Calu3 (cell line): ENCODE measurements at regions of chr1 and their contacts with region 1.

Region 1: DNA sequence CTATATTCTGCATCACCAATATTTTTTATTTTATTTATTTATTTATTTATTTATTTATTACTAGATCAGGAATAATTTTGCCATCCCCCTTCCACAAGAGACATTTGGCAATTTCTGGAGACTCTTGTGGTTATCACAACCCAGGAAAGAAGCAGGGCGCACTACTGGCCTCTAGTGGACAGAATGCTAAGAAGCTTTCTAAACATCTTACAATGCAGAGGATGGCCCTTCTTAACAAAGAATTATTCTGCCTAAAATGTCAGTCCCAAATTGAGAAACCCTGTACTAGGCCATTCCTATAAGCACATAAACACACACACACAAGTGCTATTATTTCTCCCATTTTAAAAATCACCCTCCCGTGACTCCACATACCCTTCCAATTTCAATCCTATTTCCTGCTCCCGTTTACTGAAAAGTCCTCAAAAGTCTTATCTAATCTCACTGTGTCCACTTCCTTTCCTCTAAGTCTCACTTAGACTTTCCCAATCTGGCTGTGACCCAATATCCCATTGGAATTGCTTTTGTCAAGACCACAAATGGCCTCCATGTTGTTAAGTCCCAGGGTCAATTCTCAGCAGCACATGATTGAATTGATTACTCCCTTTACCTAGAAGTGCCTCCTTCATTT is 43.7 kb upstream of the RNF11 start:
- DNase-seq: peak; percentile 76
- H3K4me3 Mint-ChIP-seq: no peak overlapping the region
- H3K27ac Mint-ChIP-seq: no peak overlapping the region
- H3K4me1 Mint-ChIP-seq: no peaks in the 10 kb centered on the region
- H3K27me3 Mint-ChIP-seq: no peaks in the 10 kb centered on the region
- CTCF ChIP-seq: peak; percentile 85

Region 2: DNA sequence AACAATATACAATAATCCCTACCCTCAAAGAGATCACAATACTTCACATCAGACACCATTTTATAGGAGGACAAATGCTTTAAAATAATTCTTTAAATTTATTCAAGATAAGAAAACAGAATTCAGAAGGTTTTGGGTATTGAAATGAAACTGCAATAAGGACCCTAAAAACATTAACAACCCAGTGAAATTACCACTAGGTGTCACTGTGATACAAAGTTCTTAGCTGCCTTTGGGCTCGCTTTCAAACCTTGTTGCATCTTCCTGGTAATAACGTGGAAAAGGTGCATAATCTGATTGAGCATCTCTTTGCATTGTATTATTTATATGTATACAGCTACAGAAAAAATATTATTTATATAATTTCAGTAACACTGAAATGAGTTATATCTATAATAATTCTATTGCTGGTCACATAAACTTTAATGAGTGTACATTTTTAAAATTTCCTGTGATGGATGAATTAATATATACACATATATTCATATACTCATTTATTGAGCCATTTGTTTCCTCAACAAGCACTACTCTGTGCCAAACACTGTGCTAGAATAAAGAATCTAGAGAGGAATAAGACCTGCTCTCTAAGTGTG is 417.5 kb before region 1 on chr1:
- CTCF ChIA-PET with region 1: interaction called, 7 read pairs
- intact Hi-C with region 1: loop called (anchors 5 kb)
- DNase-seq: peak; percentile 12
- H3K4me3 Mint-ChIP-seq: no peak overlapping the region
- H3K27ac Mint-ChIP-seq: no peak overlapping the region
- H3K4me1 Mint-ChIP-seq: no peaks in the 10 kb centered on the region
- H3K27me3 Mint-ChIP-seq: no peaks in the 10 kb centered on the region
- CTCF ChIP-seq: no peak

Region 3: GRCh38 chr1:50929376-50929958 is 262.9 kb before region 1 on chr1:
- CTCF ChIA-PET with region 1: interaction called, 10 read pairs
- intact Hi-C with region 1: loop called (anchors 2 kb)
- DNase-seq: no peak
- H3K4me3 Mint-ChIP-seq: no peak overlapping the region
- H3K27ac Mint-ChIP-seq: no peak overlapping the region
- H3K4me1 Mint-ChIP-seq: peaks cover 17% of the 10 kb centered on the region
- H3K27me3 Mint-ChIP-seq: no peaks in the 10 kb centered on the region
- CTCF ChIP-seq: peak; percentile 20

Region 4: GRCh38 chr1:51058858-51059257 is 133.5 kb before region 1 on chr1:
- CTCF ChIA-PET with region 1: no interaction called
- intact Hi-C with region 1: loop called (anchors 5 kb)
- DNase-seq: peak; percentile 19
- H3K4me3 Mint-ChIP-seq: no peak overlapping the region
- H3K27ac Mint-ChIP-seq: no peak overlapping the region
- H3K4me1 Mint-ChIP-seq: peaks cover 32% of the 10 kb centered on the region
- H3K27me3 Mint-ChIP-seq: no peaks in the 10 kb centered on the region
- CTCF ChIP-seq: peak; percentile 54

Region 5: GRCh38 chr1:51296383-51297357 is 104.3 kb after region 1 on chr1:
- CTCF ChIA-PET with region 1: interaction called, 4 read pairs
- intact Hi-C with region 1: loop called (anchors 10 kb)
- DNase-seq: peak; percentile 90
- H3K4me3 Mint-ChIP-seq: peak overlapping the region; percentile 35
- H3K27ac Mint-ChIP-seq: peak overlapping the region; percentile 47
- H3K4me1 Mint-ChIP-seq: peaks cover 17% of the 10 kb centered on the region
- H3K27me3 Mint-ChIP-seq: no peaks in the 10 kb centered on the region
- CTCF ChIP-seq: peak; percentile 98